Mammary epithelial cell (primary cell): ENCODE measurements at regions of chr3 and their contacts with region 1.

Region 1: DNA sequence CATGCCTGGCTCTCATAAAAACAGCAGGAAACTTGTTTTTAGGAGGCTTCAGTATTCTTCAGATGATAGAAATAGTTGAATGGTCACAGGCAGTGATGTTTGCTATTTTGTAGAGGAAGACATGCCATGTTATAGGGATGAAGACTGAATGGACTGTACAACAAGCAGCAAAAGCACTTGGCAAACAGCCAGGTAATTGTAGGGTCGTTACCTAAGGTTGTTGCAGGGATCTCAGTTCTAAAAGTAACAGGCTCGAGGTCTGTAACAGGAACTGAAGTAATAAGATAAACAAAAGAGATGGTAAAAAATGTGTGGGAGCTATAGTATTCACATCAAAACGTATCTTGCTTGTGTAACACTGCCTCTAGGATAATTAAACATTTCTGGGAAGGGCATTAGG is 116.3 kb downstream of the TFG start:
- DNase-seq: no peak
- H3K4me3 ChIP-seq: no peak overlapping the region
- H3K27ac ChIP-seq: no peak overlapping the region
- H3K4me1 ChIP-seq: no peaks in the 10 kb centered on the region
- H3K27me3 ChIP-seq: peaks cover 2% of the 10 kb centered on the region
- CTCF ChIP-seq: no peak

Region 2: GRCh38 chr3:100719136-100719535 is 106.4 kb before region 1 on chr3:
- CTCF ChIA-PET with region 1: no interaction called
- dilution Hi-C with region 1: no loop called
- in situ Hi-C with region 1: no loop called
- intact Hi-C with region 1: no loop called
- DNase-seq: no peak
- H3K4me3 ChIP-seq: no peak overlapping the region
- H3K27ac ChIP-seq: no peak overlapping the region
- H3K4me1 ChIP-seq: no peaks in the 10 kb centered on the region
- H3K27me3 ChIP-seq: no peaks in the 10 kb centered on the region
- CTCF ChIP-seq: no peak

Region 3: GRCh38 chr3:100766069-100766468 is 59.5 kb before region 1 on chr3:
- CTCF ChIA-PET with region 1: no interaction called
- dilution Hi-C with region 1: no loop called
- in situ Hi-C with region 1: no loop called
- intact Hi-C with region 1: no loop called
- DNase-seq: peak; percentile 75
- H3K4me3 ChIP-seq: no peak overlapping the region
- H3K27ac ChIP-seq: no peak overlapping the region
- H3K4me1 ChIP-seq: peaks cover 9% of the 10 kb centered on the region
- H3K27me3 ChIP-seq: no peaks in the 10 kb centered on the region
- CTCF ChIP-seq: no peak

Region 4: GRCh38 chr3:100899440-100900091 is 74.0 kb after region 1 on chr3:
- CTCF ChIA-PET with region 1: no interaction called
- dilution Hi-C with region 1: no loop called
- in situ Hi-C with region 1: no loop called
- intact Hi-C with region 1: no loop called
- DNase-seq: no peak
- H3K4me3 ChIP-seq: no peak overlapping the region
- H3K27ac ChIP-seq: no peak overlapping the region
- H3K4me1 ChIP-seq: no peaks in the 10 kb centered on the region
- H3K27me3 ChIP-seq: no peaks in the 10 kb centered on the region
- CTCF ChIP-seq: no peak

Region 5: GRCh38 chr3:100968932-100969906 is 143.6 kb after region 1 on chr3:
- CTCF ChIA-PET with region 1: no interaction called
- dilution Hi-C with region 1: no loop called
- in situ Hi-C with region 1: no loop called
- intact Hi-C with region 1: no loop called
- DNase-seq: no peak
- H3K4me3 ChIP-seq: no peak overlapping the region
- H3K27ac ChIP-seq: no peak overlapping the region
- H3K4me1 ChIP-seq: peaks cover 13% of the 10 kb centered on the region
- H3K27me3 ChIP-seq: no peaks in the 10 kb centered on the region
- CTCF ChIP-seq: no peak

Region 6: GRCh38 chr3:101381809-101382208 is 556.2 kb after region 1 on chr3:
- CTCF ChIA-PET with region 1: no interaction called
- dilution Hi-C with region 1: no loop called
- in situ Hi-C with region 1: no loop called
- intact Hi-C with region 1: loop called (anchors 1 kb)
- DNase-seq: peak; percentile 21
- H3K4me3 ChIP-seq: no peak overlapping the region
- H3K27ac ChIP-seq: no peak overlapping the region
- H3K4me1 ChIP-seq: no peaks in the 10 kb centered on the region
- H3K27me3 ChIP-seq: no peaks in the 10 kb centered on the region
- CTCF ChIP-seq: peak; percentile 45 to 46